Aorta (tissue), 5 donors: ENCODE measurements at regions of chr3 and their contacts with region 1.

Region 1: DNA sequence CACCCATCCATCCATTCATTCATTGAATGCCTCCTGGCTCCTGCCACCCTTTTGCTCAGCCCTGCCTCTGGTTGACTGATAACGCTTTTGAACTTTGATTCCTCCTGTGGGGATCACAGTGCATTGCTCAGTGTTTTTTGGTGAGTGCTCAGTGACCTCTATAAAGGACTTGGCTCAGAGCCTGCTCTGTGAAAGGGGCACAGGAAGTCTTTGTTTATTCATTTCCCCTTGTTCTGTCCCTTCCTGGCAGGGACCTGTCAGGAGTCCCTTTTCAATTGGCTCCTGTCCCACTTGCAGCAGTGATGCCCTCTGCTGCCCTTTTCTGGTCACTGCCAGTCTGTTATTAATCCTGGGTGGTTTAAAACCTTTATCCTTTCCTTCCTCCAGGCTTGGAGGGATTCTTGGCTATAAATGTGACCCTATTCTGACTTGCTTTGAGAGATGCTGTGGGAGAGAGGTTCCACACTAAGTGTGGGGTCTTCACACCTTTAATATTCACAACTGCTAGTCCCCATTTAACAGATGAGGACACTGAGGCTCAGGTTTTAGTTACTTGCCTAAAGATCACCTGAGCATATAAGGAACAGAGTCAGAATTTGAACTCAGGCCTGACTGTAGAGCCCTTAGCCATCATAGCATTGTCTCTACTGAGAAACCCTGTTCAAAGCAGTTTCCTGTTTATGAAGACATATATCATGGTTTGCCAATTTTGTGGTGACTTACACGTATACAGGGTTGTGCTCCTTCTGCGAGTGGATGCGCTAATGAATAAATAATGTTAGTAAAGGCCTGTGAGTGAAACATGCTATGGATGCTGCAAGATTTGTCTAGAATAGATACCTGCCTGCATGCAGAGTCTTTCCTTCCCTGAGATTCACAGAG is 23.2 kb upstream of the TATDN2 start:
- DNase-seq: peak; percentile 76 to 85
- ATAC-seq: peak; percentile 90
- H3K4me3 ChIP-seq: no peak overlapping the region
- H3K27ac ChIP-seq: peak overlapping the region in 1 of 2 donors; percentile 32
- H3K4me1 ChIP-seq: no peaks in the 10 kb centered on the region
- H3K27me3 ChIP-seq: no peaks in the 10 kb centered on the region

Region 2: DNA sequence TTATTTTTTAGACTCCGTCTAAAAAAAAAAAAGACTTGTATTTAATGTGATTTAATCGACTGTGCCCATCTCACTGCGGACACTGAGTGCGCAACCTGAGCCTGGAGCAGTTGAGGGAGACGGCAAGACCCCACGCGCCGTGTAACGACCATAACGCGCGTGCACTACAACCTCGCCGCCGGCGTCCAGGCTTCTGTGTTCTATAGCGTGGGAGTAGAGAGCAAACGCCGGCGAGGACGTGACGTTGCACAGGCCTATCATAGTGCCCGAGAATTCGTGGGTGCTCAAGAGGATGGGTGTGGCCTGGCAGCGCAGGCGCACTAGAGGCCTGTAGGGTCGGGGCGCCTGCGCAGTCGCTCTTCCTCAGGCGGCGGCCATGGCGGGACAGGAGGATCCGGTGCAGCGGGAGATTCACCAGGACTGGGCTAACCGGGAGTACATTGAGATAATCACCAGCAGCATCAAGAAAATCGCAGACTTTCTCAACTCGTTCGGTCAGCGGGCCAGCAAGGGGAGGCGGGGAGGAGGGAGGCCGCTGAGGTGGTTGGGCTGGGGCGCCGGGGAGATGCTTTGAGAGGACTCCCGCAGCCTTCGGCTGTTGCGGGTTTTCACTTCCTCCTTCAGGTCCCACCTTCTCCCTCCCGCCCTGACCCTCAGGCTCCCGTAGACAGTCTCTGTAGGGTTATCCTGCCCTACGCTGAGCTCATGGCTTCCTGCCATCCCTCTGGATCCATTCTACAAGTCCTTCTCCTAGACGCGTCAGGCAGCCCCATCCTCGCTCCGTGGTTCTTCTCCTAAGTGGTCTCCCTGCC is 109.5 kb before region 1 on chr3 and contains the start of gene BRK1:
- intact Hi-C with region 1: loop called in 1 of 2 experiments (anchors 5 kb)
- DNase-seq: peak; percentile 97 to 98
- ATAC-seq: peak; percentile 100
- H3K4me3 ChIP-seq: peak within 1 kb of the TSS; percentile 63 to 71
- H3K27ac ChIP-seq: peak within 1 kb of the TSS in 1 of 2 donors; percentile 55
- H3K4me1 ChIP-seq: no peaks in the 10 kb centered on the region
- H3K27me3 ChIP-seq: no peaks in the 10 kb centered on the region
- total RNA-seq, gene BRK1: 103 to 108 TPM